Activated CD8-positive, alpha-beta T cell treated with anti-CD3 and anti-CD28 coated beads for 36 hours (primary cell): ENCODE measurements at regions of chr19 and their contacts with region 1.

Region 1: DNA sequence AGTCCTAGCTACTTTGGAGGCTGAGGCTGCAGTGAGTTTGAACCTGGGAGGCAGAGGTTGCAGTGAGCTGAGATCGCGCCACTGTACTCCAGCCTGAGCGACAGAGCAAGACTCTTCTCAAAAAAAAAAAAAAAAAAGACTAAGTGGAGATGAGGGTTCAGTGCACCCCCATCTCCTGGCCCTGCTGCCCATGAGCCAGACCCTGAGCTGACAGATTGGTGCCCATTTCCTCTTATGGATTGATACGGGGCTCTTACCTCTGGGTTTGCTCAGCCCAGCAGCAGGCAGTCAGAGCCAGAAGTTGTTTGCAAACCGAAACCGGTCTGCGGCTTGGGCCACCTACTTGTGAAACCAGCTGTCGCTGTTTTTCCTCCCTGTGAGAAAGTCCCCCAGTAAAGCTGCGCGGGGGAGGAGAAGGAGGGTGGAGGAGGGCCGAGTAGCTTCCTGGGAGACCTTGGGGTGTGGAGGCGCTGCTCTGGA is 36.9 kb downstream of the ARRDC2 start:
- DNase-seq: peak; percentile 98
- ATAC-seq: peak; percentile 93
- H3K4me3 Mint-ChIP-seq: peak overlapping the region; percentile 51
- H3K27ac Mint-ChIP-seq: peak overlapping the region; percentile 79
- H3K4me1 Mint-ChIP-seq: peaks cover 37% of the 10 kb centered on the region
- H3K27me3 Mint-ChIP-seq: peaks cover 2% of the 10 kb centered on the region
- CTCF ChIP-seq: no peak

Region 2: DNA sequence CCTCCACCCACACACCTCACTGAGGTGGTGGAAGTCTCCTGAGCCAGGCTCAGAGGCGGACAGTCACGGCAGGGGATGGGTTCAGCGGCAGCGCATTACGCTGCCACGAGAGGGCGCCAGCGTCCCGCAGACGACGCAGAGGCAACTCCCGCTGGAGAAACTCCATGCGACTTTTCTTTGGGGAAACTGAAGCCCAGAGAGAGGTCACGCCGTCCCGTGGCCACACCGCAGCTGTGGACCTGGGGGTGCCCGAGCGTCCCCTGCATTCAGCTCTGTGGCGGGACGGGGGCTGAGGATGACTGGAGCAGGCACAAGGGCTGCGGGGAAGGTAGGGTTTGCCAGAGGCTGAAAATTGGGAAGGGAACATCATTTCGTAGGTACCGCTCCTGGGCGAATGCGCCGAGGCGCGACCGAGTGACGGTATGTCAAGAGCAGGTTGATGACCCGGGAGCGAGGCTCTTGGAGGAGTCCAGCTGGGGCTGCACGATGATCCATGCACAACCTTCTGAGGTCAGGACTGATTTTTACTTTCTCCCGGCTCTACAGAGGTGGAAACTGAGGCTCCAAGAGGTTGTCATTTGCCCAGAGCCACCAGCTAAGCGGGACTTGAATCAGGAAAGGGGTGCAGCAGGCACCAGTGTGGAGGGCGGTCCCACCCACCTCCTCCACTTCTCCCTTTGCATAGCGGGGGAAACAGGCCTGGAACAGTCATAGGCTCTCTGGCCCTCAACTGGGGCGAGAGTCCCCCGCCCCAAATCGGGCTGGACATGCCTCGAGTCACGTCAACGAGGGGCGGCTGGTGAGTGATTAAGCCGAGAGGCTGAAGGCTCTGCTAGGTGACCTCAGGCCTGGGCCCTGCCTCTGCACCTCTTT is 37.6 kb before region 1 on chr19:
- CTCF ChIA-PET with region 1: interaction called, 13 read pairs
- POLR2A ChIA-PET with region 1: interaction called, 15 read pairs
- intact Hi-C with region 1: no loop called
- DNase-seq: peak; percentile 85
- ATAC-seq: peak; percentile 65
- H3K4me3 Mint-ChIP-seq: peak overlapping the region; percentile 77
- H3K27ac Mint-ChIP-seq: peak overlapping the region; percentile 82
- H3K4me1 Mint-ChIP-seq: peaks cover 29% of the 10 kb centered on the region
- H3K27me3 Mint-ChIP-seq: no peaks in the 10 kb centered on the region
- CTCF ChIP-seq: peak; percentile 100

Region 3: DNA sequence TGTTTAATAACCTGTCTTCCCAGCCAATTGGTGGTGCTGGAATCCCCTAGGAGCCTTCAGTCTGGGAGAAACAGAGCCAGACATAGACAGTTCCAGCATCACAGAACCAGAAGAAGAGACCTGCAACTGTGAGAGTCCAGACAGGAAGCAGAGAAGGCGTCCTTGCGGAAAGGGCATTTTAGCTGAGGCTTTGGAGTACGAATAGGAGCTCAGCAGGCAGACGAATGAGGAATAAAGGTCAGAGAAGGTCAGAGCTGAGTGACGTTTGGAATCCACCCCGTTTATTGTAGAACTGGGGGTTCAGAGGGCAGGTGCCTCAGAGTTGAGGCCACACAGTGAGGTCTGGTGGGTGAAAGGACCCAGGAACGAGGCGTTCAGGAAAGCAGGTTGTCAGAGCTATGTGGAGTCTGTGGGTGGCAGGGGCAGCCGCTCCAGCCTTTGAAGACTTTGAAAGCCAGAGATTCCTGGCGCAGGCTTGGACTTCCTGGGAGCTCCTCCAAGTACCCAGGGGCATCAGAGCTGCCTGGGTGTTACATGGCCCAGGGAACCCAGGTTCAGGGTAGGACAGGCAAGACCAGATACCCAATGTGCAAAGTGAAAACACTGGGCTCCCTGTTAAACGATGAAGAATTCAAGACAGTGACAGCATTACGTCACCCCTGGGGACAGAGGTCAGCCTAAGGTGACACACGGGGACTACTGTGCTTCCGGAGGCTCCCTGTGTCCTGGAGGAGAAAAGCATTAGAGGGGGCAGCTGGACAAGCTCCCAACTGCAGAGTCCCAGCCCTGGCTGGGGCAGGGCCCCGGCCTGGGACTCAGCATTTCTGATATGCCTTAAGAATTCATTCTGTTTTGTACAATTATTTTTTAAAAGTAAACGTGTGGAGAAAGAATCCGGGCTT is 31.4 kb before region 1 on chr19:
- CTCF ChIA-PET with region 1: interaction called, 13 read pairs
- POLR2A ChIA-PET with region 1: interaction called, 15 read pairs
- intact Hi-C with region 1: no loop called
- DNase-seq: peak; percentile 30
- ATAC-seq: peak; percentile 19
- H3K4me3 Mint-ChIP-seq: no peak overlapping the region
- H3K27ac Mint-ChIP-seq: peak overlapping the region; percentile 75
- H3K4me1 Mint-ChIP-seq: peaks cover 54% of the 10 kb centered on the region
- H3K27me3 Mint-ChIP-seq: no peaks in the 10 kb centered on the region
- CTCF ChIP-seq: no peak